ENCODE measurements at regions of chr1 and their contacts with region 1.

Region 1: GRCh38 chr1:156226116-156226538 is 13.3 kb downstream of the PMF1 start:
- H3K4me3 ChIP-seq: no peak overlapping the region
- H3K27ac ChIP-seq: no peak overlapping the region
- H3K4me1 ChIP-seq: no peaks in the 10 kb centered on the region
- CTCF ChIP-seq: no peak

Region 2: GRCh38 chr1:155794605-155795245 is 431.4 kb before region 1 on chr1:
- CTCF ChIA-PET with region 1: no interaction called
- POLR2A ChIA-PET with region 1: no interaction called
- H3K4me3 ChIP-seq: no peak overlapping the region
- H3K27ac ChIP-seq: no peak overlapping the region
- H3K4me1 ChIP-seq: no peaks in the 10 kb centered on the region
- CTCF ChIP-seq: no peak

Region 3: DNA sequence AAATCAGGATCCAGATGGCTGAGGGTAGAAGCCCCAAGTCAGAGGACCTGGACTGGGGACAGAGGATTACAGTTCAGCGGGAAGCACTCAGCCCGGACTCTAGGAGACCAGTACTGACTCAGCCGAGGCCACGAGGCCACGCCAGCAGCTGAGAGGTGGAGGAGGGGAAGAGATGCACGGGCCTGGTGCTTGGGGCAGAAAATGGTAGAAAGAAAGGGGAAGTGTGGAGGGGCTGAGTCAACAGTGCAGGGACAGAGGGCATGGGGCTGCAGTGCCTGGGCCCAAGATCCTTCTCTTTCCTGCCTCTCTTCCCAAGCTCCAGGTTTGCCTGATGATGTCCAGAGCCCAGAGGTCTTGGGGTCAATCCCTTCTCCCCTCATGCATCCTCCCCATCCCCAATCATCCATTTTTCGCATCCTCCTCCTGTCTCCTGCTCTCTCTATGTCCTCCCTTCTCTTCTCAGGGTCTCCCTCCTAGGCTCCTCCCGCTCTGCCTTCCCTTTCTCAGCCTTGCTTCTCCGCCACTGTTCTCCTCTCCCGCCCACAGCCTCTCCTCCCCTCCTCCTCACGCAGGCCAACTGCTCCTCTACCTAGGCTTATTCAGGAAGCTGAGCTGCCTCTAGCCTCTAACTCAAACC is 255.5 kb before region 1 on chr1:
- CTCF ChIA-PET with region 1: no interaction called
- POLR2A ChIA-PET with region 1: no interaction called
- H3K4me3 ChIP-seq: no peak overlapping the region
- H3K27ac ChIP-seq: no peak overlapping the region
- H3K4me1 ChIP-seq: peaks cover 11% of the 10 kb centered on the region
- CTCF ChIP-seq: no peak

Region 4: DNA sequence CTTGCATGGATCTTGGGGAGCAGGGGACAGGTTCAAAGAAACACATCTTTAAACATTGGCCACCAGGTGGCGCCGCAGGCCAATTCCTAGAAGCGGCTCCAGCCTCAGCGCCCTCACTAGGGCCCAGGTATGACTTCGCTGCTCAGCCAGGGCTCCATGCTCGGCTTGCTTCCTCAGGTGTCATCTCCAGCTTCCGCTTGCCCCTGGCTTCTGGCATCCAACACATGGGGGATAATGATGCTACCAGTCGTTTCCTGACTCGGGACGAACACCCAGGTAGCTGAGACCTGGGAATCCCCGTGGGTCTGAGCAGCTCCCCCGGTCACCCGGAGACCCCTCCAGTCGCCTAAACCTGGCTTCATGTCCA is 135.3 kb before region 1 on chr1:
- CTCF ChIA-PET with region 1: interaction called, 22 read pairs
- POLR2A ChIA-PET with region 1: no interaction called
- H3K4me3 ChIP-seq: no peak overlapping the region
- H3K27ac ChIP-seq: no peak overlapping the region
- H3K4me1 ChIP-seq: no peaks in the 10 kb centered on the region
- CTCF ChIP-seq: peak; percentile 93

Region 5: GRCh38 chr1:156129706-156130581 is 96.2 kb before region 1 on chr1:
- CTCF ChIA-PET with region 1: interaction called, 32 read pairs
- POLR2A ChIA-PET with region 1: interaction called, 7 read pairs
- H3K4me3 ChIP-seq: no peak overlapping the region
- H3K27ac ChIP-seq: peak overlapping the region; percentile 21
- H3K4me1 ChIP-seq: peaks cover 6% of the 10 kb centered on the region
- CTCF ChIP-seq: peak; percentile 93

Region 6: DNA sequence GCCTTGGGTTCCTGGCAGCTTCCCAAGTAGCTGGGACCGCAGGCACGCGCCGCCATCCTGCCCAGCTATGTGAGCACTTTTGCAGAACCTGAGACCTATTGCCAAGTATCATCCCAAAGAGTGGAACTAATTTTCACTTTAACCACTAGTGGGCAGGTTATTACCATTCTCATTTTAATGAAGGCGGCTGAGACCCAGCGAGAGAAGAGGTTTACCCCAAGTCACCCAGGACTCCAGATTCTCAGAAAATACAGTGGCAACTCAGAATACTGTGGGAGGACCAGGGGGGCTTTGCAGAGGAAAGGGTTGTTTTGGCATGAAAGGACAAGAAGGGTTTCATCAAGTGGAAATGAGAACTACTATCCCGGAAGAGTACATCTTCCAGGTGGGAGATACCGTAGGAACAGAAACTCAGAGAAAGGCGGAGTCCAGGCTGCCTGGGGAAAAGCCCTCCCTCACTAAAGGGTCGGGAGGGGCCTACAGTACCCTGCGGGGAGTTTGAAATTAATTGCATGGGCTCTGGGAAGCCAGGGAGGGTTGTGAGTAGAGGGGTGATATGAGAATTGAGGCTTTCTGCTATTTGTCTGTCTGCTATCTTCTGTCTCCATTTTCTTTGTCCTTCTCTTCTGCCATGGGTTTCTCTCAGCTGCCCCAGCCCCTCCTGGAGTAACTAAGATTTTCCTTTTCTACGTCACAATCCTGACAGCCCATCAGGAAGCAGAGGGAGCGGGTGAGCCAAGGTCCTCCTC is 79.9 kb before region 1 on chr1:
- CTCF ChIA-PET with region 1: interaction called, 210 read pairs
- POLR2A ChIA-PET with region 1: interaction called, 8 read pairs
- H3K4me3 ChIP-seq: no peak overlapping the region; the same call in 1 of the 2 replicates
- H3K27ac ChIP-seq: no peak overlapping the region
- H3K4me1 ChIP-seq: no peaks in the 10 kb centered on the region
- CTCF ChIP-seq: peak; percentile 58

Region 7: DNA sequence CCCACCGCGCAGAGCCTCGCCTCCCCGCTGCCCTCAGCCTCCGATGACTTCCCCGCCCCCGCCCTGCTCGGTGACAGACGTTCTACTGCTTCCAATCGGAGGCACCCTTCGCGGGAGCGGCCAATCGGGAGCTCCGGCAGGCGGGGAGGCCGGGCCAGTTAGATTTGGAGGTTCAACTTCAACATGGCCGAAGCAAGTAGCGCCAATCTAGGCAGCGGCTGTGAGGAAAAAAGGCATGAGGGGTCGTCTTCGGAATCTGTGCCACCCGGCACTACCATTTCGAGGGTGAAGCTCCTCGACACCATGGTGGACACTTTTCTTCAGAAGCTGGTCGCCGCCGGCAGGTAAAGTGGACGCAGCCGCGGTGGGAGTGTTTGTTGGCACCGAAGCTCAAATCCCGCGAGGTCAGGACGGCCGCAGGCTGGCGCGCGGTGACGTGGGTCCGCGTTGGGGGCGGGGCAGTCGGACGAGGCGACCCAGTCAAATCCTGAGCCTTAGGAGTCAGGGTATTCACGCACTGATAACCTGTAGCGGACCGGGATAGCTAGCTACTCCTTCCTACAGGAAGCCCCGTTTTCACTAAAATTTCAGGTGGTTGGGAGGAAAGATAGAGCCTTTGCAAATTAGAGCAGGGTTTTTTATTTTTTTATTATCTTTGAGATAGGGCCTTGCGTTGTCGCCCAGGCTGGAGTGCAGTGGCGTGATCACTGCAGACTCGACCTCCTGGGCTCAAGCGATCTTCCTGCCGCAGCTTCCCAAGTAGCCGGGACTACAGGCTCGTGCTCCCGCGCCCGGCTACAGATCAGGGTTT is 13.1 kb before region 1 on chr1 and contains the start of gene PMF1:
- CTCF ChIA-PET with region 1: interaction called, 29 read pairs
- POLR2A ChIA-PET with region 1: interaction called, 14 read pairs
- H3K4me3 ChIP-seq: peak within 1 kb of the TSS; percentile 99
- H3K27ac ChIP-seq: peak within 1 kb of the TSS; percentile 91
- H3K4me1 ChIP-seq: no peaks in the 10 kb centered on the region
- CTCF ChIP-seq: no peak

Measured in HEK293 (cell line).